Lower leg skin (tissue), 4 donors: ENCODE measurements at regions of chr2 and their contacts with region 1.

Region 1: DNA sequence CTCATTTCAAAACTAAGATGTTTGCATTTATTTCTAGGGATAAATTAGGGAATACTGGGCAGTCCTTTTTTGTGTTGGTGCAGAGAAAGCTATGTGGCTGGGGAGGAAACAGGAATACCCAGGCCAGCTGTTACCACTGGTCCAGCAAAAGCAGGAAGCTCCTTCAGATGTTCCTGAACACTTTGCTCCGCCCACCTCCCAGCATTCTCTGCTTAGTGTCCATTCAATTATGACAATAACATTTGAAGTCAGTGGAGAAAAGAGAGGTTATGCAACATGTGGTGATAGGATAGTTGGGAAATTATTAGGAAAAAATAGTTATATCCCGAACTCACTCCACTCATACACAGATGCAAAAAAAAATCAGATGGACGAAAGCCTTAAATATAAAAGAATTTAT is 22.1 kb upstream of the ARPC2 start:
- DNase-seq: no peak
- H3K4me3 ChIP-seq: no peak overlapping the region
- CTCF ChIP-seq: no peak
- POLR2A ChIP-seq: no peak

Region 2: GRCh38 chr2:218137514-218137913 is 57.4 kb before region 1 on chr2:
- intact Hi-C with region 1: no loop called
- DNase-seq: no peak
- H3K4me3 ChIP-seq: no peak overlapping the region
- CTCF ChIP-seq: no peak
- POLR2A ChIP-seq: no peak

Region 3: DNA sequence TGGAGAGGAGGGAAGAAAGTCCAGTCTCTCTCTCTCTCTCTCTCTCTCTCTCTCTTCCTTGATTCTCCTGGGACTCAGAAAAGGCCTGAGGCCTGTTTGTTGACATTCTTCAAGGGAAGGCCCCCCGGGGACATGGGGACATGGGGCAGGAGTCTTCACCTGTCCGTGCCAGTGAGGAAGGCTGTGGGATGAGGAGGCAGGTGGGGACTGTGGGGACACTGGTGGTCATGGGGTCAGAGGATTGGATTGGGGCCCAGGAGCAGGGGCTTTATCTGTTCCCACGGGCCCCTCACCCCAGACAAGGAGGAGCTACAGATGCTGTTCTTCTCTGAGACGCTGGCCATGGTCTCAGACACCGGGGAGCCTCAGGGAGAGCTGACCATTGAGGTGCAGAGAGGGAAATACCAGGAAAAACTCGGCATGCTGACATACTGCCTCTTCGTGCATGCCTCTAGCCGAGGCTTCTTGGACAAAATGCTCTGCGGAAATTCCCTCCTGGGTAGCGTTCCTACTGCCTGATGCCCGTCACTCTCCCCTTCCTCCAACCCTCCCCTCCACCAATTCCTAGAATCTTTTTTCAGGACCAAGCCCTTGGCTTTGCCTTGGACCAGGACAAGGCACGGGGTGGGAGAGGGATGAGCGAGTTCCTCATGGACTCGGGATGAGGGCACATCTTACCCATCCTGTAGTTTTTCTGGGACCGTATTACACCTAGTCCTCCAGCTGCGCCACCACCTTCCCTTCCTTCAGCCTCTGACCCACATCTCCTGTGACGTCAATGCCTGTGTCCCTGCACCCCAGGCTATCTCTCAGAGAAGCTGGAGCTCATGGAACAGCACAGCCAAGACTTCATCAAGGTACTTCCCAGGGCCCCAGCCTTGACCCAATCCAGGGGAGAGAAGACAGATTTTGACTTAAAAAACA is 162.6 kb after region 1 on chr2:
- intact Hi-C with region 1: loop called (anchors 10 kb)
- DNase-seq: no peak
- H3K4me3 ChIP-seq: no peak overlapping the region
- CTCF ChIP-seq: no peak
- POLR2A ChIP-seq: no peak